AG04449 (cell line): ENCODE measurements at regions of chr3 and their contacts with region 1.

Region 1: GRCh38 chr3:82133070-82133606 is 371.7 kb upstream of the GBE1 start:
- DNase-seq: peak; percentile 12
- H3K4me3 ChIP-seq: no peak overlapping the region
- CTCF ChIP-seq: peak; percentile 72

Region 2: DNA sequence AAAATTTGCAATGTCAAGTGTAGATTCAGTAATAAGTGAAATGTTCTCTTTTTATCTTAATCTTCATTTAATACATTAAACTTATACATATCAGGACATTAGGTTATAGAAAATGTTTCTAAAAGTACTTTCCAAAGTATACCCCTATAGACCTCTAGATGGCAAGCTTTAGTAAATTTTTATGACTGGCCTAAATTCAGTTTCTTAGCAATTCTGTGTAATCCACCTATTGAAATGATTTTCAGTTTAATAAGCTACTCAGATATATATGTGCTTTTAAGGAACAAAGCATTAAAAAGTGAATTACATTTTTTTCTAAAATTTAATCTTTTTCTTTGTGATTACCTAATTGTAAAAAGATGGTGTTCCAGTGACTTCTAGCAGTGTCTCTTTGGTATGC is 713.9 kb before region 1 on chr3:
- CTCF ChIA-PET with region 1: interaction called, 14 read pairs
- POLR2A ChIA-PET with region 1: no interaction called
- DNase-seq: no peak
- H3K4me3 ChIP-seq: no peak overlapping the region
- CTCF ChIP-seq: peak; percentile 17

Region 3: DNA sequence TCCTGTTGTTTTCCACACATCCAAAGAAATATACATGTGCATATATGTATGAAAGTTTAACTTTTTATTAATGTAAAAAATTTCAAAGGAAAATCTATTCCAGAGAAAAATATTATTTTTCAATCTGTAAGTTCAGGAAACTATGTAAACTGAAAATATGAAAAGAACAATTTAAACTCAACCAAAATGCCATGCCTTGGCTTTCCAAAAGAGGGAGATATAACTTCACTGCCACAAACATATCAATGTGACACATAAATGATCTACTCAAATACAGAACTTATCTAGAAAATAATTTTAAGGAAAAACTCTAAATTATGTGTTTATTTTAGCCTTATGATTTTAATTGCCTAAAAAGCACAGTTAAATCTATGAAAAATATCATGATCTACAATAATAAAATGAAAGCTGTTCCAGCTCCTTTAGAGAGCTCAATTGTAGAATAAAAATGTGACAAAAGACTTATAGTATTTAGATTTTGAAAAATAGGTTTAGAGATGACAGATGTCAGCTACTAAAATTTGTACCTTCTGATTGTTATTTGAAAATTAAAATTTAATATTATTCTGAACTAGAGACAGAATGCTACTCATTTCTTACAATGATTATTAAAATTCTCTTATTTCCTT is 466.5 kb before region 1 on chr3:
- CTCF ChIA-PET with region 1: interaction called, 15 read pairs
- POLR2A ChIA-PET with region 1: no interaction called
- DNase-seq: no peak
- H3K4me3 ChIP-seq: no peak overlapping the region
- CTCF ChIP-seq: peak; percentile 44

Region 4: GRCh38 chr3:81910244-81910852 is 222.8 kb before region 1 on chr3:
- CTCF ChIA-PET with region 1: interaction called, 54 read pairs
- POLR2A ChIA-PET with region 1: no interaction called
- DNase-seq: no peak
- H3K4me3 ChIP-seq: no peak overlapping the region
- CTCF ChIP-seq: peak; percentile 66

Region 5: GRCh38 chr3:82114589-82114988 is 18.5 kb before region 1 on chr3:
- CTCF ChIA-PET with region 1: interaction called, 11 read pairs
- POLR2A ChIA-PET with region 1: no interaction called
- DNase-seq: no peak
- H3K4me3 ChIP-seq: no peak overlapping the region
- CTCF ChIP-seq: no peak

Region 6: GRCh38 chr3:82143661-82144412 is 10.7 kb after region 1 on chr3:
- CTCF ChIA-PET with region 1: interaction called, 30 read pairs
- POLR2A ChIA-PET with region 1: no interaction called
- DNase-seq: no peak
- H3K4me3 ChIP-seq: no peak overlapping the region
- CTCF ChIP-seq: no peak

Region 7: DNA sequence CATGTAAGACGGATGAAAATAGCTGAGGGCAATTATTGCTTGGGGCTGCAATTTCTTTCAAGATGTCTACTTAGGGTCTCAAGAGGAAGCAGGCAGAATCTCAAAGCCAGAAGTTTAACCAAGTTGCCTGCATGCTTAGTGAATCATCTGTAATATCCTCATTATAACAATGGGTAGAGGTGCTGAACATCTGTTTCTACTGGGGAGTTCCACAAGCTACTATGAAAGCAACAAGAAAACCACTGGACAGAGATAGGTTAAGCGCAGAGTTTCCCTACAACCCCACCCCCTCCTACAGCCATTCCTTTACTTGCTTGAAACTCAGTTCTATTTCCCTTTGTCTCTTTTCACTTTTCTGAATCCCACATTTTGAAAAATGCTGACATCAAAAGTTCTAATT is 387.7 kb after region 1 on chr3:
- CTCF ChIA-PET with region 1: no interaction called
- POLR2A ChIA-PET with region 1: no interaction called
- DNase-seq: no peak
- H3K4me3 ChIP-seq: no peak overlapping the region
- CTCF ChIP-seq: no peak